ENCODE measurements at regions of chr3 and their contacts with region 1.

Region 1: GRCh38 chr3:160707187-160707794 is 30.3 kb downstream of the ARL14 start:
- DNase-seq: peak in 2 of 5 donors; percentile 31 to 43
- ATAC-seq: peak; percentile 58 to 85 (median 72)
- H3K4me3 ChIP-seq: no peak overlapping the region
- H3K27ac ChIP-seq: no peak overlapping the region
- H3K4me1 ChIP-seq: peaks cover 0 to 3% (median 0%) of the 10 kb centered on the region in 12 donors
- H3K27me3 ChIP-seq: no peaks in the 10 kb centered on the region
- CTCF ChIP-seq: peak; percentile 43 to 78 (median 61)
- POLR2A ChIP-seq: no peak

Region 2: DNA sequence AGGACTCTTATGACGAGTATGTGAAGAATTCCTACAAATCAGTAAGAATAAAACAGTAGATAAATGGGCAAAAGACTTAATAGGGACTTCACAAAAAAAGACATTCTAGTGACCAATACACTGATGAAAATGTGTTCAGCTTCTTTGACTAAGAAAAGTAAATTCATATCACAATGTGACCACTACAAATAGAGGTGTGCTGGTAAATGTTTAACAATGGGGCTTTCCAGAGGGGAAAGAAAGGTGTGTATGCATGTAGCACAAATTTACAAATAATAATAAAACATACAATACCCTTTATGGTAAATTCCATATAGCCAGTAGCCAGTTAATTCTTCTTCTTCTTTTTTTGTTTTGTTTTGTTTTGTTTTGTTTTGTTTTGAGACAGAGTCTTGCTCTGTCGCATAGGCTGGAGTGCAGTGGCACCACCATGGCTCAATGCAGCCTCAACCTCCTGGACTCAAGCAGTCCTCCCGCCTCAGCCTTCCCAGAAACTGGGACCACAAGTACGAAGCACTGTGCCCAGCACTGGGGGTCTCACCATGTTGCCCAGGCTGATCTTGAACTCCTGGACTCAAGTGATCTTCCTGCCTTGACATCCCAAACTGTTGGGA is 496.3 kb after region 1 on chr3:
- intact Hi-C with region 1: loop called in 1 of 10 experiments (anchors 10 kb)
- DNase-seq: no peak
- ATAC-seq: no peak
- H3K4me3 ChIP-seq: no peak overlapping the region
- H3K27ac ChIP-seq: no peak overlapping the region
- H3K4me1 ChIP-seq: no peaks in the 10 kb centered on the region
- H3K27me3 ChIP-seq: no peaks in the 10 kb centered on the region
- CTCF ChIP-seq: no peak
- POLR2A ChIP-seq: no peak